ENCODE measurements at regions of chr17 and their contacts with region 1.

Region 1: DNA sequence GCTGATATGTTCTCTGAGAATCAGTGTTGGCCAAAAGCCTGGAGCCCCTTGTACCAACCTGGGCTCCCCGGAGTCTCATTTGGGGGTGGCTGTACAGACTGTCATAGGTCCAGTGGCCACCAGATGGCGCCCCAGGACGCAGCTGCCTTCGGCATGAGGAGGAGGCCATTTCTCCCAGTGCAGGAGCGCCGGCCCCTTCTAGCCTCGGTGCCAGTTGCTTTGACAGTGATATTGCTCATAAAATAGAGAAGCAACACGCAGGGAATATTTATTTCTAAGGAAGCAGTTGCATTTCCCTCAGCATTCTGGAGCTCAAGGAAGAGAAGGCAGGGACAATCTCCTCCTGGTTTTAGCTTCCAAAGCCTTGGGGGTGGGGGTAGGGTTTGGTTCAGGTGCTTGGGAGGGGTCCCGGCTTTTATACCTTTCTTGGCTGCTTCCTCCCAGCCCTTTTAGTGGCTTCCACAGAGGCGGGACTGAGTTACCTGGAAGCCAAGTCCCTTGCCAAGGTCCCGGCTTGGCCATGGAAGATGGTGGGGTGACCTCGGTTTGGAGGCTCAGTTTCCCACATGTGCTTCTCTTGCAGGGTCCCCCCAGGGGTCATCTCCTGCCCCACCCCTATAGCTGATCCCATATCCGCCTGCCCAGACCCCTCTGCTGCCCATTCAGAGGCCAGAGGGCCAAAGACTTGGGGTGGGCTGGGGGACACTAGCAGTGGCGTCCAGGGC is 117.8 kb upstream of the CDC42EP4 start:
- DNase-seq: peak; percentile 60
- ATAC-seq: peak; percentile 100
- H3K4me3 ChIP-seq: no peak overlapping the region
- H3K27ac ChIP-seq: no peak overlapping the region
- H3K4me1 ChIP-seq: no peaks in the 10 kb centered on the region
- H3K27me3 ChIP-seq: no peaks in the 10 kb centered on the region
- CTCF ChIP-seq: peak; percentile 89
- POLR2A ChIP-seq: no peak
- RAD21 ChIP-seq: peak; percentile 83

Region 2: GRCh38 chr17:73710095-73710592 is 280.5 kb after region 1 on chr17:
- CTCF ChIA-PET with region 1: no interaction called
- POLR2A ChIA-PET with region 1: no interaction called
- dilution Hi-C with region 1: no loop called
- in situ Hi-C with region 1: loop called (anchors 25 kb)
- intact Hi-C with region 1: no loop called
- DNase-seq: peak; percentile 4
- ATAC-seq: no peak
- H3K4me3 ChIP-seq: no peak overlapping the region
- H3K27ac ChIP-seq: no peak overlapping the region
- H3K4me1 ChIP-seq: no peaks in the 10 kb centered on the region
- H3K27me3 ChIP-seq: no peaks in the 10 kb centered on the region
- CTCF ChIP-seq: peak; percentile 37
- POLR2A ChIP-seq: no peak
- RAD21 ChIP-seq: peak; percentile 39

Region 3: GRCh38 chr17:74176546-74177001 is 747.0 kb after region 1 on chr17:
- CTCF ChIA-PET with region 1: interaction called, 7 read pairs
- POLR2A ChIA-PET with region 1: no interaction called
- dilution Hi-C with region 1: no loop called
- in situ Hi-C with region 1: loop called (anchors 10 kb)
- intact Hi-C with region 1: loop called (anchors 1 kb)
- DNase-seq: peak; percentile 48
- ATAC-seq: peak; percentile 97
- H3K4me3 ChIP-seq: no peak overlapping the region
- H3K27ac ChIP-seq: no peak overlapping the region
- H3K4me1 ChIP-seq: no peaks in the 10 kb centered on the region
- H3K27me3 ChIP-seq: no peaks in the 10 kb centered on the region; the same call in 1 of the 2 replicates
- CTCF ChIP-seq: peak; percentile 84
- POLR2A ChIP-seq: no peak
- RAD21 ChIP-seq: peak; percentile 84

Region 4: GRCh38 chr17:74203439-74204240 is 774.0 kb after region 1 on chr17 and contains the start of gene RPL38:
- CTCF ChIA-PET with region 1: interaction called, 5 read pairs
- POLR2A ChIA-PET with region 1: no interaction called
- dilution Hi-C with region 1: no loop called
- in situ Hi-C with region 1: no loop called
- intact Hi-C with region 1: loop called (anchors 1 kb)
- DNase-seq: peak; percentile 98
- ATAC-seq: peak; percentile 94
- H3K4me3 ChIP-seq: peak within 1 kb of the TSS; percentile 87
- H3K27ac ChIP-seq: peak within 1 kb of the TSS; percentile 76
- H3K4me1 ChIP-seq: peaks cover 5% of the 10 kb centered on the region
- H3K27me3 ChIP-seq: peaks cover 7% of the 10 kb centered on the region
- CTCF ChIP-seq: peak; percentile 98
- POLR2A ChIP-seq: peak; percentile 99
- RAD21 ChIP-seq: peak; percentile 41
- total RNA-seq, gene RPL38: 111 and 296 TPM in 2 replicates